Upper lobe of right lung (tissue), 1 donor: ENCODE measurements at regions of chr15 and their contacts with region 1.

Region 1: GRCh38 chr15:76139368-76140073 is 79.7 kb downstream of the TMEM266 start:
- DNase-seq: no peak
- ATAC-seq: peak; percentile 93
- H3K4me3 ChIP-seq: no peak overlapping the region
- H3K27ac ChIP-seq: peak overlapping the region; percentile 26
- H3K4me1 ChIP-seq: peaks cover 7% of the 10 kb centered on the region
- H3K27me3 ChIP-seq: peaks cover 6% of the 10 kb centered on the region
- CTCF ChIP-seq: peak; percentile 87

Region 2: DNA sequence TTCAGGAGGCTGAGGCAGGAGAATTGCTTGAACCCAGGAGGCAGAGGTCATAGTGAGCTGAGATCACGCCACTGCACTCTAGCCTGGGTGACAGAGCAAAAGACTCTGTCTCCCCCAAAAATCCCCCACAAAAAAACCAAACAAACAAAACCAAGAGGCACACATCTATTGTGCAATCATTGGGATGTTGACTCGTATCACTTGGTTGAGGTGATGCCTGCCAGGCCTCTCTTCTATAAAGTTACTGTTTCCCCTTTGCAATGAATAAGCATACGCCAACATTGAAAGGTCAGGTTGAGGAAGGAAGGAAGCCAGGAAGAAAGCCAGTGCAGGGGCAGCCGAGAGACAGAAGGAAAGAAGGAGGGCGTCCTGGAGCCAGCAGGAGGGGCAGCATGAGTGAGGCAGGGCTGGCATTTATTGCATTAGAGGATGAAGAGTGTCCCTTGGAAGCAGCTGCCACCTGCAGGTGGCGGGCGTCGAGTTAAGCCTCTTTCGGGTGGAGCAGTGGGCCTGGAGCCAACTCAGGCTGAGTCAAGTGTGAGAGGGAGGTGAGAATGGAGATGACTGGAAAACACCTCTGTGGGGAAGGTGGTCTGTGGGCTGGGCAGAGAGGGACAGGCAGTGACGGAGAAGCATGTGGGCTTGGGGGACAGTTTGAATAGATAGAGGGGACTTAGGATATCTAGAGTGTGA is 418.6 kb before region 1 on chr15:
- intact Hi-C with region 1: no loop called
- DNase-seq: peak; percentile 80
- ATAC-seq: peak; percentile 6
- H3K4me3 ChIP-seq: no peak overlapping the region
- H3K27ac ChIP-seq: no peak overlapping the region
- H3K4me1 ChIP-seq: peaks cover 7% of the 10 kb centered on the region
- H3K27me3 ChIP-seq: no peaks in the 10 kb centered on the region
- CTCF ChIP-seq: peak; percentile 21

Region 3: GRCh38 chr15:76035593-76035992 is 103.9 kb before region 1 on chr15:
- intact Hi-C with region 1: no loop called
- DNase-seq: no peak
- ATAC-seq: no peak
- H3K4me3 ChIP-seq: no peak overlapping the region
- H3K27ac ChIP-seq: no peak overlapping the region
- H3K4me1 ChIP-seq: no peaks in the 10 kb centered on the region
- H3K27me3 ChIP-seq: no peaks in the 10 kb centered on the region
- CTCF ChIP-seq: no peak

Region 4: GRCh38 chr15:76057332-76058000 is 82.1 kb before region 1 on chr15:
- intact Hi-C with region 1: loop called (anchors 10 kb)
- DNase-seq: no peak
- ATAC-seq: peak; percentile 50
- H3K4me3 ChIP-seq: peak overlapping the region; percentile 27
- H3K27ac ChIP-seq: no peak overlapping the region
- H3K4me1 ChIP-seq: peaks cover 15% of the 10 kb centered on the region
- H3K27me3 ChIP-seq: peaks cover 14% of the 10 kb centered on the region
- CTCF ChIP-seq: peak; percentile 78